CD4-positive, alpha-beta T cell (primary cell): ENCODE measurements at regions of chr6 and their contacts with region 1.

Region 1: GRCh38 chr6:13413900-13414555 is 73.4 kb downstream of the GFOD1 start:
- DNase-seq: peak in 7 of 14 experiments; percentile 11 to 60 (median 36)
- ATAC-seq: peak; percentile 62
- H3K4me3 ChIP-seq: no peak overlapping the region
- H3K4me3 Mint-ChIP-seq: no peak overlapping the region
- H3K27ac ChIP-seq: no peak overlapping the region
- H3K27ac Mint-ChIP-seq: no peak overlapping the region
- H3K4me1 ChIP-seq: peaks cover 3% of the 10 kb centered on the region
- H3K4me1 Mint-ChIP-seq: peaks cover under 1% of the 10 kb centered on the region
- H3K27me3 ChIP-seq: no peaks in the 10 kb centered on the region
- H3K27me3 Mint-ChIP-seq: no peaks in the 10 kb centered on the region
- CTCF ChIP-seq: no peak

Region 2: DNA sequence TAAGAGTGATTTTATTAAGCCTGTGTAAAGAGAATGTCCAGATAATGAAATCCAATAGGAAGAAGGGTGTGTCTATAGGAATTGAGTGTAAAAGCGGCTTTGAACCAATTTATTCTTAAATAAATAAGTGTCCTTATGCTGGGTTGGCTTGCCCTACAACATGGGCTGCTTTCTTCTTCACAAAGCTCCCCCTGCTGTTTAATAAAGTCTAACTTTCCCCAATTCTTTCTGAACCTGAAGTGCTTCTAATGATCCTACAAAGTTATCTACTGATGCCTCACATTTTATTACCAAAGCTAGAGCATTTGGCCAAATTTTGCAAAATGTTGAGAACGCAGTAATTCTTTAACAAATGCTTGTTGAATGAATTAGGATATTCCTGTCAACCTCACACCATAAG is 124.1 kb after region 1 on chr6:
- CTCF ChIA-PET with region 1: no interaction called
- POLR2A ChIA-PET with region 1: no interaction called
- intact Hi-C with region 1: loop called in 1 of 2 experiments (anchors 5 kb)
- DNase-seq: peak in 4 of 14 experiments; percentile 10 to 55 (median 49)
- ATAC-seq: no peak
- H3K4me3 ChIP-seq: no peak overlapping the region
- H3K4me3 Mint-ChIP-seq: no peak overlapping the region
- H3K27ac ChIP-seq: no peak overlapping the region
- H3K27ac Mint-ChIP-seq: no peak overlapping the region
- H3K4me1 ChIP-seq: no peaks in the 10 kb centered on the region
- H3K4me1 Mint-ChIP-seq: no peaks in the 10 kb centered on the region
- H3K27me3 ChIP-seq: no peaks in the 10 kb centered on the region
- H3K27me3 Mint-ChIP-seq: no peaks in the 10 kb centered on the region
- CTCF ChIP-seq: peak; percentile 60